Right ventricle myocardium inferior (tissue), 1 donor: ENCODE measurements at regions of chr6 and their contacts with region 1.

Region 1: GRCh38 chr6:21593412-21593926 is at the start of gene SOX4:
- DNase-seq: peak; percentile 94
- ATAC-seq: peak; percentile 83
- total RNA-seq, gene SOX4: 7.8 TPM

Region 2: DNA sequence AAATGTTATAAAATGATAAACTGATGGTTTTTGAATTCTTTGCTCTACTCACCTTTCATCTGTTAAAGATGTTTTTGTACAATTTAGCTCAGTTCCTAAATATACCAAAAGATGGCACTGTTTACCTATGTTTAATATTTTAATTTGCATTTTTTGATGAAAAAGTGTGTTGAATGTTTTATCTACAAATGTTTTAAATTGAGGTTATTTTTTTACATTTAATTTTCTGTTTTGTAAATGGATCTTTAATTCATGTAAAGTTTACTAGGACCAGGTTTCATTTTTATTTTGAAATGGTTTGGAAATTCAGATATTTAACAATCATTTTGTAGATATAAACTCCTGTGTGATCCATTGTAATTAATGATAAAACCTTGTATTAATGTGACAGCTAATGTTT is 1029.2 kb before region 1 on chr6:
- intact Hi-C with region 1: loop called (anchors 2 kb)
- DNase-seq: no peak
- ATAC-seq: no peak

Region 3: GRCh38 chr6:21331235-21331634 is 262.2 kb before region 1 on chr6:
- intact Hi-C with region 1: loop called (anchors 10 kb)
- DNase-seq: no peak
- ATAC-seq: peak; percentile 34

Region 4: GRCh38 chr6:21634582-21634981 is 41.1 kb after region 1 on chr6:
- intact Hi-C with region 1: no loop called
- DNase-seq: no peak
- ATAC-seq: no peak

Region 5: DNA sequence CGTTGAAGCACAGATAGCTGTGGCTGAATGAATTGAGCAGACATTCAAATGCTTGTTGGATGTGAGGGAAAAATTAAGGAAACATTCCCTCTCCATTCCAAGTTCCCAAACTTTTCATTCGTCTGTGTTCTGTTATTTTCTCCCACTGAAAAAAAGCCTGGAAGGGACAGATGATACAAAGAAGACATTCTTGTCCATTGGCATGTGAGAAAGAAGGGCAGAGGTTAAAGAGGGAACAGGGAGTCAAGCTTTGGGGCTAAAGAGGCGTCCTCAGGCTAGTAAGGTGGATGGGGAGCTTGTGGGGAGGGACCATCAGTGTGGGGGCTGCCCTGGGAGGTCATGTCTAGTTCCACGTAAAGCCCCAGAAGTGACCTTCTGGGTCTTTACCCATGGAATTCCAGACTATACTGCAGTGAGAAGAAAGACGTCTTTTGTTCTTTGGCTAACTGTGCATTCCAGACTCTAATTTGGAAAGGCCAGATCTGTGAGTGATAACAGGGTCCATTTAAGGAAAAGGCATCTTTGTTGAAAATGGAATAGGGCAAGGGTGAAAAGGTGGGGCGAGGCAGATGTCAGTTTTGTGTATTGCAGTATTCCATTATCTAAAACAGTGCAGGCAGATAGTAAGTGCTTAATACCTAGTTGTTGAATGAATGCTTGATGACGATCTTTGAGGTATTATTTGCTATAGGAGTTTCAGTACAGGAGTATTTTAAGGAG is 117.6 kb after region 1 on chr6:
- intact Hi-C with region 1: no loop called
- DNase-seq: no peak
- ATAC-seq: no peak

Region 6: GRCh38 chr6:21931641-21932335 is 338.3 kb after region 1 on chr6:
- intact Hi-C with region 1: loop called (anchors 5 kb)
- DNase-seq: no peak
- ATAC-seq: no peak

Region 7: GRCh38 chr6:22737331-22737730 is 1143.9 kb after region 1 on chr6:
- intact Hi-C with region 1: loop called (anchors 10 kb)
- DNase-seq: no peak
- ATAC-seq: peak; percentile 46

Region 8: DNA sequence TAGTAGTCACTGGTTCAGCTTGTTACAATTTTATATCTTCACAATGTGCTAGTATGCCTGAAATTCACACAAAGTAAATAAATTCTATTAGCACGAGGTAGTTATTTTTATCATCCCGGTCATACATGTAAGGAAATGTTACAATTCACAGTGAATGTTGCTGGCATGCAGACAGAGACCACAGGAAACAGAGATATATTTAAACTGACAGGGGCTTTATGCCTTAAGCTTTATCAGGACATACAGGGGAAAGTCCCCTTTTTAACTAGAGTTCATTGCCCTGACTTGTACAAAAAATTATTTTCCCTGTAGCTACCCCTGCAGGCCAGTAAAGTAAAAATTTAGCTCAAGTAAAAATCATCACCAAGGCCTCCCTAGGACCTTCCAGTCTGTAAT is 1820.6 kb after region 1 on chr6:
- intact Hi-C with region 1: loop called (anchors 10 kb)
- DNase-seq: no peak
- ATAC-seq: peak; percentile 52